ENCODE measurements at regions of chr2 and their contacts with region 1.

Region 1: DNA sequence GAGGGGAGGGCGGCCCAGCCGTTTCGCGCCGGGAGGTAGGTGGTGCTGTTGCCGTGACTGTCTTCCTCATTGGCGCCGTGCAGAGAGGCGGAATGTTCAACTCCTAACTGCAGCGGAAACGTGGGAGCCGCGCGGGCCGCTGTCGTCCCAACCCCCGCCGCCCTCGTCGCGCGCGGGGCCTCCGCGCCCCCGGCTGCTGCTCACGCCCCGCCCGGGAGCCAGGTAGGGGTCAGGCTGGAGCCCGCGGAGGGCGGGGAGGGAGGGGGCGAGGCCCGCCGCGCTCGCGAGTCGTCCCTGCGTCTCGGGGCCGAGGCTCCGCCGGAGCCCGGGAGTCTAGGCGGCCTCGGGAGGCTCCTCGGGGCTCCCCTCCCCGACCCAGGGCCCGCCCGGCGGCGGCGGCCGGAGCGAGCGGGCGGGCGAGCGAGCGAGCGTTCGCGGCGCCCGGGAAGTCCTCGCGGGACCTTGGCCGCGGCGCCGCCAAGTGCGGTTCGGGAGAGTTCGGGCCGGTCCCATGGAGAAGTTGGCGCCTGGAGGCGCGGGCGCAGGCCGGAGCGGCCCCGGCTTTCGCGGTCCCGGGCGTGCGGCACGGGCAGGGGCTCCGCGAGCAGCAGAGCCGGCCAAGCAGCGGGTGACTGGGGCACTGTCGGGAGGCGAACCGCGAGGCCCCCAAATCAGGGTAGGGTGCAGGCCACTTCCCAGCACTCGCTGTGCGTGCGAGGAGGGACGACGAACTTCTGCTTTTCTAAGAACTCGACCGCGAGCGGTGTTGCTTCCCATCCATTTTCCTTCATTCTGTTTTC is at the start of gene MAP3K20:
- DNase-seq: peak; percentile 91
- total RNA-seq, gene MAP3K20: 519 TPM

Region 2: GRCh38 chr2:172972005-172972619 is 103.9 kb before region 1 on chr2:
- intact Hi-C with region 1: loop called (anchors 5 kb)
- DNase-seq: no peak

Region 3: GRCh38 chr2:173027181-173028128 is 48.5 kb before region 1 on chr2:
- intact Hi-C with region 1: loop called (anchors 2 kb)
- DNase-seq: peak; percentile 83

Region 4: GRCh38 chr2:173037245-173038120 is 38.5 kb before region 1 on chr2:
- intact Hi-C with region 1: loop called (anchors 2 kb)
- DNase-seq: no peak

Region 5: DNA sequence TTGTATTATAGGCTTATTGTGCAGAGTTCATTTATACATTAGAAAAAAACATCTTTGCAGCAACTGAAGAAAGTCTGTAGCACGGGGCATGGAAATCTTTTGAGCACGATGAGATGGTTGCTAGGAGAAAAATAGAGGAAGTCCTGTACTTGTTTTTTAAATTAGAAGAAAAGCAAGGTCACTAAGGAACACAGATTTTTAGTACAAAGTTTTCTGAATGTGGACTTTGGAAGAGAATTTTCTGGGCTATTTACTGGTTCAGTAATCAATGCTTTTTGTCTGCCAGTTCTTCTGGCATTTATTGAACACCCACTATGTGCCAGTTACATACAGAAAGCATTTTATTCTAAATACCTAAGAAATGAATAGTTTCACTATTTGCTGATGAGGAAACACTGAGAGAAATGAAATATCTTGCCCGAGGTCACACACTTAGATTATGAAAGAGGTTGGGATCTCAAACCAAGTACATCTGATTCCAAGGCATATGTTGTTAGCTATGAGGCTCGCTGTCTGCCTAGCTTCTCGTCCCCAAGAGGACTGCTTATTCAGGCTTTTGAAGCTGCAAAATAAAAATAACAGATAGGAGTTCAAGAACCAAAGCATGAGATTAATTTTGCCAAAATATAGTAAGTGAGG is 15.9 kb before region 1 on chr2:
- intact Hi-C with region 1: no loop called
- DNase-seq: no peak

Region 6: GRCh38 chr2:173184031-173185004 is 108.3 kb after region 1 on chr2:
- intact Hi-C with region 1: loop called (anchors 5 kb)
- DNase-seq: no peak

Region 7: DNA sequence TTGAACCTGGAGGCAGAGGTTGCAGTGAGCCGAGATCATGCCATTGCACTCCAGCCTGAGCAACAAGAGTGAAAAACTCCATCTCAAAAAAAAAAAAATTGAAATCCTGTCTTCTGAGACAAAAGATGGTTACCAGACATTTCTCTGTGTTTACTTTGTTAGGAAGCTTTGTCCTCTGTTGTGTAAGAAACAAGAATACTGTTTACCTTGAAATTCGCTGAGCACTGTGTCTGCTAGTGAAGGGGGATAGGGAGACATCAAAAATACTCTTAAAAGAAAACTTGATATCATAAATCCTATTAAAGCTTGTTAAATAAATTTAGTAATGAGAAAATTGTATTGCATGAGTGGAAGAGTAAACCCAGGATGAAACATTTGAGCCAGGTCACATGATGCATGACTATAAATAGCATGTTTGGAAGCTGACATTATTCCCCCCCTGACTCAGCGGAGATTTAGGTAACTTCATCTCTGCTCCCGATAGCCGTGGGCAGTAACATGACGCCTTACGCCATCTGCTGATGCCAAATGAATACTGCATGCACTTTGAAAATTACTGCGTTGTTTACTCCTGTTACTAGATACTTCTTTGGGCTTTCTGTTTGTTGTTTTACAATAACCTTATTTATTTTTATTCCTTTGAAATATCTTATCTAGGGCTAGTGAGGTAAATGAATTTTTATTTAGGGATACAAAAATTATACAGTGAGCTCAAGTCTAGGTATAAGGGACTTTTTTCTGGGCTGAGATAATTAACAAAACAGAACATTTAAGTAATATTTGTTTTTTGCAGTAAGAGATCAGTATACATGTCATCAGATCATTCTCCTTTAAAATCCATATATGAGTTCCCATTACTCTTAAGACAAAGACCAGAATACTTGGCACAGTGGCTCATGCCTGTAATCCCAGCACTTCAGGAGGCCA is 134.6 kb after region 1 on chr2:
- intact Hi-C with region 1: loop called (anchors 2 kb)
- DNase-seq: no peak

Region 8: GRCh38 chr2:173488861-173489260 is 412.9 kb after region 1 on chr2:
- intact Hi-C with region 1: no loop called
- DNase-seq: no peak

Measured in cardiac septum (tissue), 1 donor.